ENCODE measurements at regions of chr1 and their contacts with region 1.

Region 1: DNA sequence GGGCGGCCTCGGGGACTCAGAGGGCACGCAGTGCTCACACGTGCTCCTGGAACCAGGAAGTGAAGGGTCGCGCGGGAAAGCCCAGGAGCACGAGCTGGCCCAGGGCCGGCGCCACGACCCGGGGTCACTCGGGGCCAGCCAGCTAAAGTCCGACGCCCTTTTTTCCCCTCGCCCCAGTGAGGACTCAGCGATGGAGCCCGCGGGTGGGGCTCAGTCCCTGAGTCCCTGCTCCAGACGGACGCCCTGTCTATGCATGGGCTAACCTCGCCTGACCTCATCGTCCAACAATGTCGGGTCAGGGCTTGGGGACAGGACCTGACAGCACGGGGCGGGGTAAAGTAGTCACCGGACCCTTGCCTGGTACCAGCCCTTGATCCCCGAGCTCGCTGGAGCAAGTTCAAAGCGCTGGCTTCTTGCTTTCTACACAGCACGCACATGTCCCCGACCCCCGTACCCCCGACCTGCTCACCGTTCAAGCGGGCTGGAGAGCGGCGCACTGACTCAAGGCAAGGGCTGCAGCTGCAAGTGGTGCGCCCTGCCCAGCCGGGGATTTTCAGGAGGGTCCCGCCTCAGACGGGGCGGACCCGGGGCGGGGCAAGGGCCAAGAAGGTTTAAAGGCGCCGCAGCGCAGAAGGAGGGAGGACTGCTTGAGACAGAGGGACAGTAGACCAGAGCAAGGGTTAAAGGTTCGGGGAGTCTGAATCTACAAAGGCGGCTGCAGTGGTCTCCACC is at the start of gene TAGLN2:
- DNase-seq: peak; percentile 93
- H3K4me3 ChIP-seq: peak within 1 kb of the TSS; percentile 62 to 93 (median 77)
- H3K27ac ChIP-seq: peak within 1 kb of the TSS; percentile 98
- H3K4me1 ChIP-seq: peaks cover 44% of the 10 kb centered on the region
- H3K27me3 ChIP-seq: no peaks in the 10 kb centered on the region
- CTCF ChIP-seq: no peak
- total RNA-seq, gene TAGLN2: 178 to 454 TPM

Region 2: DNA sequence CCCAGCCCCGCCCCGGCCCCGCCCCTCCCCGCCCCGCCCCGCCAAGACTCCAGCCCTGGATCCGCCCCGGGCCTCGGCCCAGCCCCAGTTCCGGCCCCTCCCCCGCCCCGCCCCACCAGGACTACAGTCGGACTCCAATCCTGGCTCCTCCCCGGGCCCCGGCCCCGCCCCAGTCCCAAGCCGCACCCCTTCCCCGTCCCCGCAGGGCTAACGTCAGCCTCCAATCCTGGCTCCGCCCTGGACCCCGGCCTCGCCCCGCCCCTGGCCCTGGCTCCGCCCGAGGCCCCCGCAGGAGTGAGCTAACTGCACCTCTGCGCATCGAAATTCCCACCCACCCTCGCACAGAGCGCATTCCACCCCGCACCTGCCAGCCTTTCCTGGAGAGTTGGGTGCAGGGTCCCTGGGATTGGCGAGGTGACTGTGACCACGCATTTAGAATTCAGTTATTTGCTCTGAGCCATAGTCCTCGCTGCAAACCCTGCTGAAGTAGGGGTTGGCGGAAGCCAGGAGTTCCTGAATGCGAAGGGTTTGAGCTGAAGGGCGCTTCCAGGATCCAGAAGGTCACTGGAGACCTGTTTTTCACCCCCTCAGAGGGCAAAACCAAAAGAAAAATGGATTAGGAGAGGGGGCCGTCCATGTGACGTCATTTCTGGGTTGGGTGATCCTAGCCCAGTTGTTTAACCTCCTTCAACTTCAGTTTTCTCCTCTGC is 173.9 kb after region 1 on chr1:
- CTCF ChIA-PET with region 1: no interaction called
- dilution Hi-C with region 1: no loop called
- in situ Hi-C with region 1: no loop called
- intact Hi-C with region 1: no loop called
- DNase-seq: peak; percentile 80
- H3K4me3 ChIP-seq: peak overlapping the region in 2 of 3 experiments; percentile 30 to 43
- H3K27ac ChIP-seq: no peak overlapping the region
- H3K4me1 ChIP-seq: peaks cover 37% of the 10 kb centered on the region
- H3K27me3 ChIP-seq: no peaks in the 10 kb centered on the region
- CTCF ChIP-seq: no peak

Region 3: DNA sequence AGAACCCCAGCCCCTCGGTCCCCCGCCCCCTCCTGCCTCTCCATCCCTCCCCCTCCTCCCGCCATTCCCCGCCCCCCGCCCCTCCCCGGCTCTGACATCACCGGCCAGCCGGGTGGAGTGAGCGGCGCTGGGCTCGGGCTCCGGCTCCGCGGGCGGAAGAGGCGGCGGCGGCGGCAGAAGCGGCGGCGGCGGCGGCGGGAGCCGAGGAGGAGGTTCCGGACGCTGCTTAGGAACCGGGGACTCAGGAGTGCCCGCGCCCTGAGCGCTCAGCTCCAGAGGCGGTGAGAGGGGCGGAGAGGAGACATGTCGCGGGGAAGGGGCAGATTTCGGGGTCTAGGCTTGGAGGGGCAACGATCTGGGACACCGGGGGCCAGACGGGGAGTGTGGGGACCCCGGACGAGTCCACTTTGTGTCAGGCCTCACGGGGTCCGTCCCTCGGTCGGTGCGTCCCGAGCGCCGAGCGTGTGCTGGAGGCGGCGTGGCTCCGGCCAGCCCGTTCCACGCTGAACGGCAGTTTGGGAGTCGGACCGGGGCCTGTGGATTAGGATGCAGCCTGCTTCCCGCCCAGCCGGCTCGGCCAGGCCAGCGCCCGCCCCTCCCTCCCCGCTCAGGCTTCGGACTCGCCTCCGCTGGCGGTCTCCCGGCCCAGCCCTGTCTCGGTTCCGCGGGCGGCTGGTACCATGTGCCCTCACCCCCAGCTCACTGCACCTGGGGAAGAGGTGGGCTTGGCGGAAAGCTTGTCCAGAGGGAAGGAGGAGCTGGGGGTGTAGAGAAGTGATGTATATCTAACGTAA is 280.3 kb after region 1 on chr1 and contains the start of gene PEA15:
- CTCF ChIA-PET with region 1: no interaction called
- dilution Hi-C with region 1: loop called (anchors 25 kb)
- in situ Hi-C with region 1: no loop called
- intact Hi-C with region 1: no loop called
- DNase-seq: peak; percentile 52
- H3K4me3 ChIP-seq: peak within 1 kb of the TSS; percentile 91 to 99 (median 99)
- H3K27ac ChIP-seq: peak within 1 kb of the TSS; percentile 89
- H3K4me1 ChIP-seq: peaks cover 23% of the 10 kb centered on the region
- H3K27me3 ChIP-seq: no peaks in the 10 kb centered on the region
- CTCF ChIP-seq: no peak
- total RNA-seq, gene PEA15: 132 to 206 TPM